Prostate gland (tissue), 2 donors: ENCODE measurements at regions of chr5 and their contacts with region 1.

Region 1: DNA sequence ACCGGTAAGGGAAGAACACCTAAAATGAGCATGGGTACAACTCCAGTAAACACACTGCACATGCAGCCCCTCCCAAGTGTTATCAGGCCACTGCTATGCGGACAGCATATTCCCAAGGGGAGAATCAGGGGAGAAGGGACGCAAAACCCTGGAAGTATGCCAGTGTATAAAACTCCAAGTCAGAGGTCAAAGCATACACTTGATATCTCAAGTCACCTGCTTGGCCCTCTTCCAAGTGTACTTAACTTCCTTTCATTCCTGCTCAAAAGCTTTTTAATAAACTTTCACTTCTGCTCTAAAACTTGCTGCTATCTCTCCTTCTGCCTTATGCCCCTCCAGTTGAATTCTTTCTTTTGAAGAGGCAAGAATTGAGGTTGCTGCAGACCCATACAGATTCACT is 408.1 kb downstream of the HTR1A start:
- DNase-seq: no peak
- H3K4me3 ChIP-seq: no peak overlapping the region
- H3K27ac ChIP-seq: no peak overlapping the region
- H3K4me1 ChIP-seq: no peaks in the 10 kb centered on the region
- H3K27me3 ChIP-seq: no peaks in the 10 kb centered on the region
- CTCF ChIP-seq: no peak
- POLR2A ChIP-seq: no peak

Region 2: DNA sequence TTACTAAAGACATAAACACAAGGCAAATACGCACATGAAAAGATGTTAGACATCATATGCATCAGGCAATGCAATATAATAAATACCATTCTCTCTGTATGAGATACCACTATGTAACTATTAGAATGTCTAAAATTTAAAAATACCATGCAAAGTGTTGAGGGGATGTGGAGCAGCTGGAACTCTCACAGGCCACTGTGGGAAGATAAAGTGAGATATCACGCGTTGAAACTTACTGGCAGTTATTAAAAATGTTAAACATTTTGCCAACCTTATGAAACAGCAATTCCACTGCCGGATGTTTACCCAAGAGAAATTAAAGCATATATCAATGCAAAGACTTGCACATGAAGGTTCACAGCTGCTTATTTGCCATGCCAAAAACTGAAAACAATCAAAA is 418.9 kb before region 1 on chr5:
- intact Hi-C with region 1: loop called (anchors 5 kb)
- DNase-seq: no peak
- H3K4me3 ChIP-seq: no peak overlapping the region
- H3K27ac ChIP-seq: no peak overlapping the region
- H3K4me1 ChIP-seq: no peaks in the 10 kb centered on the region
- H3K27me3 ChIP-seq: no peaks in the 10 kb centered on the region
- CTCF ChIP-seq: no peak
- POLR2A ChIP-seq: no peak

Region 3: GRCh38 chr5:63351164-63351563 is 203.0 kb before region 1 on chr5:
- intact Hi-C with region 1: no loop called
- DNase-seq: no peak
- H3K4me3 ChIP-seq: no peak overlapping the region
- H3K27ac ChIP-seq: no peak overlapping the region
- H3K4me1 ChIP-seq: no peaks in the 10 kb centered on the region
- H3K27me3 ChIP-seq: no peaks in the 10 kb centered on the region
- CTCF ChIP-seq: no peak
- POLR2A ChIP-seq: no peak